Head of caudate nucleus (tissue), 42 donors: ENCODE measurements at regions of chr2 and their contacts with region 1.

Region 1: DNA sequence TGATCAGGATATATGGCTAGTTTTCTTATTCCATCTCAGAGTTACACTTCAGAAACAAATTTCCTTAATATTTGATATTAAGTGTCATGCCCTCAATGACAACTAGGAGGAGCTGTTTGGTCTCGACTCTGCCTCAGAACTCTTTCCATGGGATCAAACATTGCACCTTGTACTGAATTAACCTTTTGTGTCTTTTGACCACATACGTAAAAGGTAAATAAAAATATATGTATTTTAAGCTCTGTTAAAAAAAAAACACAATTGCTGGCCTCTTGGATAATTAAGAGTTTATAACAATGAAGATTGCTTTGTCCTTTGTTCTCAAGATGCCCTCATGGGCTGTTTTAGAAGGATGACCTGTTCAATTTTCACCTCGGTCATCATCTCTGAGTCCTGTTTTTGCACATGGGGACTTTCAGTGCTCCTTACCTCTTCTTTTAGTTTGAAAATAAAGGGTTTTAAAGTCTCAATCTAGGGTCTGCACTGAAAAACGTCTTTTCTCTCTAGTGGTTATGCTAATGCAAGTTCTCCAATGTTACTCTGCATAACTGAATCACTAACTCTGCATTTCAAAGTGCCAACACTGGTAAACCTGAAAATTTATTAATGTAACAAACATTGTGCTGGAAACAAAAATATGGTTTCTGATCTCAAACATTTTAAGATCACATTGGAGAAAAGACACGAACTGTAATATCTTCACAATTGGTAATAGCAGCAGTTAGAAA is 18.8 kb upstream of the FN1 start:
- DNase-seq: peak in 1 of 42 donors; percentile 37

Region 2: GRCh38 chr2:215367662-215368492 is 86.8 kb before region 1 on chr2:
- intact Hi-C with region 1: no loop called
- DNase-seq: no peak

Region 3: GRCh38 chr2:215917953-215918620 is 463.4 kb after region 1 on chr2:
- intact Hi-C with region 1: loop called (anchors 10 kb)
- DNase-seq: no peak